ENCODE measurements at regions of chr16 and their contacts with region 1.

Region 1: DNA sequence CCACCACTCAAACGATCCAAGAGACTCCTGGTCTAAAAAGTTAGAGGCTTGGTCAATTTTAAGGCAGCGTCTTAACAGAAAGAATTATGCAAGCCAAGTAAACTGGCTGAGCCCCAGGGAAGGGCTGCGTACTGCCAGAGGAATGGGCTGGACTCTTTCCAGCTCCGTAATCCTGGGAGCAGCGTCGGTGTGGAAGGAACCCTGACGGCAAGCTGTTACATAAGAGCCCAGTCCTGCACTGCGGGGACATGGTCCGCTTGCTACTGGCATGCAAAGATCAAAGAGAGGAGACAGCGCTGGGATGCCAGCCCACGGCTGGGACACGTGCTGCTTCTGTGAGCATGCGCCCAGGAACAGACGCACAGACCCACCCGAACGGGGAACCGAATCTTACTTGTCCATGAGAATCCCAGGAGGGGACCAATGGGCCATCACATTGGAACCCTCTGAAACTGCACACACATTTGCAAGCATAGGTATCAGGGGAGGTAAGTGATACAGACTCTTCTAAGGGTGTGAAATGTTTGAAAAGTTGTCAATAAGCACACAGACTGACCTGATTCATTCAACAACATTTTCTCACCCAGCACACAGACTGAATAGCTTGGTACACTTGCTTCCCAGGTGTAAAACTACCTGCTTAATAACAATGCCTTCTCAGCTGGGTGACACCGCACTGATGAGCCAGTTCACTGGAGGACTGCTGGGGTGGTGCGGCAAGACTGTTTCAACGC is 95.1 kb downstream of the ANKRD11 start:
- DNase-seq: peak; percentile 98
- H3K4me3 Mint-ChIP-seq: peak overlapping the region; percentile 14
- H3K27ac Mint-ChIP-seq: peak overlapping the region; percentile 52
- H3K4me1 Mint-ChIP-seq: peaks cover 29% of the 10 kb centered on the region
- H3K27me3 Mint-ChIP-seq: no peaks in the 10 kb centered on the region
- CTCF ChIP-seq: no peak

Region 2: DNA sequence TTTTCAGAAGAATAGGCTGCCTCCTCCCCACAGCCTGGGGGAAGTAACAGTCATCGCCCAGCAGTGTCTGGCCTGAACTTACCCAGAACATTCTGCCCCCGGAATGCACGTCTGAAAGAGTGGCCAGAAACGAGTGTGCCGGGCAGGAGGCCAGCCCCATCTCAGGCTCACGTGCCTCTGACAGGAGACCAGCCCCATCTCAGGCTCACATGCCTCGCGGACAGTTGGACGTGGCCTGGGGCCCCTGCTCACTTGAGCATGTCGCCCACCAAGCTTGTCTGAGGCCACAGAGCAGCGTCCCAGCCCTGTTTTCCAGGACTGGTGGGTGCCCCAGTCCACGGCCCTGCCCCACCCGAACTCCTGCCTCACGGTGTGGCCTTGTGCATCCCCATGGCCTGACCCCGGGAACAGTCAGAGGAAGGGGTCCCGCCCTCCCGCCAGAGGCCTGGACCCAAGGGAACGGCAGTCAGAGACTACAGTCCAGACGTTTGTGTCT is 240.1 kb before region 1 on chr16:
- CTCF ChIA-PET with region 1: no interaction called
- POLR2A ChIA-PET with region 1: no interaction called
- intact Hi-C with region 1: no loop called
- DNase-seq: peak; percentile 37
- H3K4me3 Mint-ChIP-seq: no peak overlapping the region
- H3K27ac Mint-ChIP-seq: no peak overlapping the region
- H3K4me1 Mint-ChIP-seq: peaks cover 2% of the 10 kb centered on the region
- H3K27me3 Mint-ChIP-seq: no peaks in the 10 kb centered on the region
- CTCF ChIP-seq: no peak

Region 3: GRCh38 chr16:89363621-89364393 is 31.5 kb before region 1 on chr16:
- CTCF ChIA-PET with region 1: no interaction called
- POLR2A ChIA-PET with region 1: interaction called, 10 read pairs
- intact Hi-C with region 1: no loop called
- DNase-seq: peak; percentile 75
- H3K4me3 Mint-ChIP-seq: peak overlapping the region; percentile 64
- H3K27ac Mint-ChIP-seq: peak overlapping the region; percentile 85
- H3K4me1 Mint-ChIP-seq: peaks cover 38% of the 10 kb centered on the region
- H3K27me3 Mint-ChIP-seq: no peaks in the 10 kb centered on the region
- CTCF ChIP-seq: no peak

Region 4: DNA sequence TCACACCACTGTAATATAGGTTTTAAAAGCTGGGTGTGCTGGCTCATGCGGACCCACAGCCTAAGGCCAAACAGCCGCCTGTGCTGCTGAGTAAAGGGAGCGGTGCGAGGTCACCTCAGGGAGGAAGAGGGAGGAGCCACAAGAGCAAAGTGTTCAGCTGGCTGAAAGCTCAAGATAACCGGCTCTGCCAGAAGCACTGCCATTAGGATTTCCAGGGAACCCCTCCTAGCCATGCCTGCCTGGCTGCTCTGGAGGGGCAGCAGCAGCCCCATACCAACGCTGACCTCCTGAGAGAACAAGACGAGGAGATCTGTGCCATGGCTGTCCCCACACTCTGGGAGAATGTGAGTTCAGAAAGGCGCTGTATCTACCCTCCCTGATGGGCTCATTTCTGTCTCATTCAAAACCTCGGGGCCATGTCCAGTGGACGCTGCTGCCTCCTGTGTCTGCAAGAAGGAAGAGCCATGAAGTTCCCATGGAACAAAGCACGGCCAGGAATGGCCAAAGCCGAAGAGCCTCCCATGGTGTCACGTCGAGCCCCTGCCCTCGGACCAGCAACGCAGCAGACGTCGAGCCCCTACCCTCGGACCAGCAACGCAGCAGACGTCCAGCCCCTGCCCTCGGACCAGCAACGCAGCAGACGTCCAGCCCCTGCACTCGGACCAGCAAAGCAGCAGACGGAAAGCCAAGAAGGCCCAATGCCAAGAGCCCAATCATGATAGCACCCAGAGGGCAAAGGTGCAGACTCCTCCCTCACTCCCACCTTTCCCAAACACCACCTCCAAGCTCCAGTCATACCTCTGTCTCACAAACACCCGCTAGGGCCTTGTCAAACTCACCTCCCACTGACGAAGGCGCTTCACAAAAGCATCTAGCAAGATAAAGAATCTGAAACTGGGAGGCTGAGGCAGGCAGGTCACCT is 12.0 kb before region 1 on chr16:
- CTCF ChIA-PET with region 1: interaction called, 4 read pairs
- POLR2A ChIA-PET with region 1: interaction called, 13 read pairs
- intact Hi-C with region 1: no loop called
- DNase-seq: peak; percentile 62
- H3K4me3 Mint-ChIP-seq: peak overlapping the region; percentile 19
- H3K27ac Mint-ChIP-seq: peak overlapping the region; percentile 49
- H3K4me1 Mint-ChIP-seq: peaks cover 29% of the 10 kb centered on the region
- H3K27me3 Mint-ChIP-seq: no peaks in the 10 kb centered on the region
- CTCF ChIP-seq: no peak

Region 5: GRCh38 chr16:89410794-89411309 is 15.5 kb after region 1 on chr16:
- CTCF ChIA-PET with region 1: interaction called, 3 read pairs
- POLR2A ChIA-PET with region 1: interaction called, 28 read pairs
- intact Hi-C with region 1: no loop called
- DNase-seq: peak; percentile 81
- H3K4me3 Mint-ChIP-seq: no peak overlapping the region
- H3K27ac Mint-ChIP-seq: no peak overlapping the region
- H3K4me1 Mint-ChIP-seq: peaks cover 28% of the 10 kb centered on the region
- H3K27me3 Mint-ChIP-seq: no peaks in the 10 kb centered on the region
- CTCF ChIP-seq: no peak

Region 6: DNA sequence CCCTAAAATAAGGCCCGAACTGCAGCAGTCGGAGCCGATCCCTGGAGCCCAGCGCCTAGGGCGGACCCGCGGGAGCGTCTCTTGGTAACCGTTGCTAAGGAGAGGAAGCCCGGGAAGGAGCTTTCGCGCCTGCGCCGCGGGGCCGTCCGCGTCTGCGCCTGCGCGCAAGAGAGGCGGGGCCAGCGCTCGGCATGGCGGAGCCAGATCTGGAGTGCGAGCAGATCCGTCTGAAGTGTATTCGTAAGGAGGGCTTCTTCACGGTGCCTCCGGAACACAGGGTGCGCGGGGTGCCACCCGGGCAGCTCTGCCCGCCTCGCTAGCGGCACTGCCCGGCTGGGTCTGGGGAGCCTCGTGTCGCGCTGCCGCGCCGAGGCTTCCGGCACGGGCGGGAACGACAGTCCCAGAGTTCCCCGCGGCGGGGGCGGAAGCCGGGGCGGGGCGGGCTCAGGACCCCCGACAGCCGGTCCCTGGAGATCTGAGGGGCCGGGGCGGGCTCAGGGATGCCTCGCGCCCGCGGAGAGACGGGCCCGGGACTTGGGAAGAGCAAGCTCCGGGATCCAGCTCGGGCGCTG is 291.3 kb after region 1 on chr16 and contains the start of gene CDK10:
- CTCF ChIA-PET with region 1: no interaction called
- POLR2A ChIA-PET with region 1: no interaction called
- intact Hi-C with region 1: no loop called
- DNase-seq: peak; percentile 85
- H3K4me3 Mint-ChIP-seq: peak within 1 kb of the TSS; percentile 88
- H3K27ac Mint-ChIP-seq: peak within 1 kb of the TSS; percentile 91
- H3K4me1 Mint-ChIP-seq: peaks cover 6% of the 10 kb centered on the region
- H3K27me3 Mint-ChIP-seq: no peaks in the 10 kb centered on the region
- CTCF ChIP-seq: no peak
- total RNA-seq, gene CDK10: 73.0 and 83.4 TPM in 2 replicates

Region 7: GRCh38 chr16:89972244-89973234 is 577.2 kb after region 1 on chr16:
- CTCF ChIA-PET with region 1: no interaction called
- POLR2A ChIA-PET with region 1: no interaction called
- intact Hi-C with region 1: no loop called
- DNase-seq: peak; percentile 95
- H3K4me3 Mint-ChIP-seq: peak overlapping the region; percentile 89
- H3K27ac Mint-ChIP-seq: peak overlapping the region; percentile 57
- H3K4me1 Mint-ChIP-seq: peaks cover 12% of the 10 kb centered on the region
- H3K27me3 Mint-ChIP-seq: no peaks in the 10 kb centered on the region
- CTCF ChIP-seq: no peak

Measured in MCF 10A (cell line).